Tibial artery (tissue), 4 donors: ENCODE measurements at regions of chr10 and their contacts with region 1.

Region 1: GRCh38 chr10:99926925-99927720 is 82.6 kb downstream of the DNMBP start:
- DNase-seq: peak in 1 of 2 donors; percentile 32
- H3K4me3 ChIP-seq: no peak overlapping the region
- H3K27ac ChIP-seq: no peak overlapping the region
- H3K4me1 ChIP-seq: peaks cover 0 to 10% (median 2%) of the 10 kb centered on the region in 4 donors
- H3K27me3 ChIP-seq: no peaks in the 10 kb centered on the region
- CTCF ChIP-seq: no peak

Region 2: DNA sequence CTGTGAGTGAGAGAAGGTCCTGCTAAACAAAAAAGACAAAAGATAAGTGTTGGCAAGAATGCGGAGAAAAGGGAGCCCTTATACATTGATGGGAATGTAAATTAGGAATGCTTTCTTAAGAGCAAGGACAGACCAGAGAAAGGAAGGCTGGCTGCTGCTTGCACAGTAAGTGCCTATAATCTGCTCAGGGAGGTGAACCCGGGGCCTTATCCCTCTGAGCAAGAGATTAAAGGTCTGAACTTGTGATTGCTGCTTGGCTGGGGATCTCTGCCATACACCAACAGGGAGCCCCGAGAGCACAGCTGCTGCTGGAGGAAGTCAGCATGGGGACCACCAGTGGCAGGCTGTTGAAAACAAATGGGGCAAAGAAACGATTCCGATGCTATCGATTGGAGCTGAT is 1864.7 kb before region 1 on chr10:
- intact Hi-C with region 1: loop called (anchors 10 kb)
- DNase-seq: no peak
- H3K4me3 ChIP-seq: no peak overlapping the region
- H3K27ac ChIP-seq: no peak overlapping the region
- H3K4me1 ChIP-seq: no peaks in the 10 kb centered on the region
- H3K27me3 ChIP-seq: peaks cover 0 to 33% of the 10 kb centered on the region in 2 donors
- CTCF ChIP-seq: no peak

Region 3: GRCh38 chr10:99285881-99286280 is 641.2 kb before region 1 on chr10:
- intact Hi-C with region 1: no loop called
- DNase-seq: no peak
- H3K4me3 ChIP-seq: no peak overlapping the region
- H3K27ac ChIP-seq: no peak overlapping the region
- H3K4me1 ChIP-seq: no peaks in the 10 kb centered on the region
- H3K27me3 ChIP-seq: no peaks in the 10 kb centered on the region
- CTCF ChIP-seq: no peak